Heart right ventricle (tissue), 16 donors: ENCODE measurements at regions of chr10 and their contacts with region 1.

Region 1: DNA sequence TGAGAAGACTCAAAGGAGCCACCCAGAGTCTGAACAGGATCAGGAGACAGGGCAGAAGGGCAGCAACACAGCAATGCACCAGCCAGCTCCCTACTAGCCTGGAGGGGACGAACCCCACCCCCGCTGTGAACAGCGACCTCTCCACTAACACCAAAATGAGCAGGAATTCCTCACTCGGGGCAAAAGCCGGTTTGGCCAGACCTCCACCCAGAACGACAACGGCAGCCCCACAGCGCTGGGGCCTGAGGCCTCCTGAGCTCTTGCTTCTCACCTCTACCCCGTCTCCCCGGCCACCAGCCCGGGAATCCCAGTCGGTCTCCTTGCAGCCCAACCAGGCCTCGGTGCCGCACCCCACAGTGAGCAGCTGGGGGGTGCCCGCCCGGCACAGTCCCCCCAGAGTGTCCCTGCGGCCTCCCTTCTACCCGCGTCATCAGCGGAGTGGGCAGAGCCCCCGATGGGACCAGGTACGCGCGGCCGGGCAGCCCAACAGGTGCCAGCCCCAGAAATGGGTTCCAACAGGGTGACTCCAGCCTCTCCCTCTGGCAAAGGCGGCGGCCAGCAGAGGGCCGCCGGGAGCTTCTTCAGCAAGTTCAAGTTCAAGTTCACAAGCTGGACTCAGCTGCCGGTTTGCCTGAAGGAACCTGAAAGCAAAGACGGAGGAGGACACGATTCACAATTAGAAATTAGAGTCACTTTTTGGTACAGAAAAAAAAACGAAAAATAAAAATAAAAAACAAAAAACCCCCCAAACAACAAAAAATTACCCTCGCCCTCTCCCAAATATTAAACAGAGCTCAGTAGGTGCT is 129.0 kb downstream of the MARCHF5 start:
- DNase-seq: peak; percentile 24 to 49
- ATAC-seq: peak; percentile 50 to 80 (median 62)
- H3K4me3 ChIP-seq: peak overlapping the region in 9 of 10 donors; percentile 22 to 57 (median 48)
- H3K27ac ChIP-seq: no peak overlapping the region
- H3K4me1 ChIP-seq: peaks cover 0 to 10% (median 0%) of the 10 kb centered on the region in 9 donors
- H3K27me3 ChIP-seq: peaks cover 0 to 13% (median 0%) of the 10 kb centered on the region in 7 donors
- CTCF ChIP-seq: peak in 7 of 9 donors; percentile 40 to 59 (median 52)

Region 2: GRCh38 chr10:92222603-92223275 is 197.2 kb before region 1 on chr10:
- intact Hi-C with region 1: loop called in 1 of 10 experiments (anchors 5 kb)
- DNase-seq: no peak
- ATAC-seq: no peak
- H3K4me3 ChIP-seq: no peak overlapping the region
- H3K27ac ChIP-seq: no peak overlapping the region
- H3K4me1 ChIP-seq: peaks cover 0 to 7% (median 0%) of the 10 kb centered on the region in 9 donors
- H3K27me3 ChIP-seq: no peaks in the 10 kb centered on the region
- CTCF ChIP-seq: no peak

Region 3: DNA sequence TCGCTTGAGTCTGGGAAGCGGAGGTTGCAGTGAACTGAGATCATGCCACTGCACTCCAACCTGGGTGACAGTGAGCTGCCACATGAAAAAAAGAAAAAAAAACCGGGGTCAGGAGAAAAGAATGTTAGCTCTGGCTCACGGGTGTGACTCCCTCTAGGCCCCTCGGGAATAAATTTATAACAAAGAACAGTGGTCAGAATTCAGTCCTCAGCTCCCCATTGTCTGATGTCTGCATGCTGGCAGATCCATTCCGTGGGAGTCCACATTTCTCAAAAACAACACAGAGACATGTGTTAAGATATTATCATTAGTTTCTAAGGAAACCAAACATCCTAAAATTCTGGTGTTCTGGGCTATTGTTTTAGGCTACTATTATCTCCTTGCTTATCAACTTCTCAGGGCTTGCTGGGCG is 38.4 kb before region 1 on chr10:
- intact Hi-C with region 1: loop called in 1 of 10 experiments (anchors 5 kb)
- DNase-seq: peak in 1 of 2 donors; percentile 55
- ATAC-seq: peak; percentile 75 to 97 (median 86)
- H3K4me3 ChIP-seq: no peak overlapping the region
- H3K27ac ChIP-seq: peak overlapping the region in 6 of 10 donors; percentile 45 to 74 (median 64)
- H3K4me1 ChIP-seq: peaks cover 0 to 23% (median 5%) of the 10 kb centered on the region in 9 donors
- H3K27me3 ChIP-seq: no peaks in the 10 kb centered on the region
- CTCF ChIP-seq: no peak

Region 4: GRCh38 chr10:92567952-92568600 is 148.1 kb after region 1 on chr10:
- intact Hi-C with region 1: no loop called
- DNase-seq: no peak
- ATAC-seq: no peak
- H3K4me3 ChIP-seq: no peak overlapping the region
- H3K27ac ChIP-seq: no peak overlapping the region
- H3K4me1 ChIP-seq: peaks cover 0 to 38% (median 19%) of the 10 kb centered on the region in 9 donors
- H3K27me3 ChIP-seq: no peaks in the 10 kb centered on the region
- CTCF ChIP-seq: no peak